Aorta (tissue), 5 donors: ENCODE measurements at regions of chr9 and their contacts with region 1.

Region 1: DNA sequence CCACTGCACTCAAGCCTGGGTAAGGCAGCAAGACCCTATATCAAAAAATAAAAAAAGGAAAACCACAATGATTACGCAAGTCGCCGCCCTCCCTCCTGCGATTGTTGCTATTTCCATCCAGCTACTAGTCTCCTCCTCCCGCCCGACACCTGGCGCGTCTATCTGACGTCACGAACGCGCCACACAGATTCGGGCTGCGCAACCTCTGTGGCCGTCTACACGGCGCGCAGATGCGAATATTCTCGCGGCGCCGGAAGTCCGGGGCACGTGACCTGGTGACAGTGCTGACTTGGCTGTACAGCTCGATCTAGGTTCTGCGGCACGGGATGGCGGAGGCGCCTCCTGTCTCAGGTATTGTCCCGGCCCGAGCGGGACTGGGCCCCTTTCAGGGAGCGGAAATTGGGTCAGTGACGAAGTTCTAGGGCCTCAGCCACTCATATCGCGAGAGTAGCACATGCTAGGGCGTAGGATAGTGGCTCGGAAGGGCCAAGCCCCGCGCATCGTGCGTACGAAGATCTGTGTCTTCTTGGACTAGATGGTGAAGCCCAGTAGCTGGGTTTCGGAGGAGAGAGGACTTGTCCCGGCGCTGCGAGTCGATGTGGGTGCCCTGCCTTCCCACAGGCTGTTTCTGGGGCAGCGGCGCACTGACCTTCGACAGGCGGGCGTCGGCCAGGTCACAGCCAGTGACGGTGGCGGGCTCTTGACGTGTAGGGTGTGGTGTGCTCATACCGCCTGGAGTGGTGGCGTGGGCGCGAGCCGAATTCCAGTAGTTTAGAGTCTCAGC is at the start of gene NFX1:
- DNase-seq: peak; percentile 99
- ATAC-seq: peak; percentile 98
- H3K4me3 ChIP-seq: peak within 1 kb of the TSS; percentile 67 to 77
- H3K27ac ChIP-seq: peak within 1 kb of the TSS; percentile 84 to 90
- H3K4me1 ChIP-seq: peaks cover 0 to 3% of the 10 kb centered on the region in 2 donors
- H3K27me3 ChIP-seq: no peaks in the 10 kb centered on the region
- total RNA-seq, gene NFX1: 35.8 to 38.3 TPM

Region 2: GRCh38 chr9:33264473-33265177 is 25.8 kb before region 1 on chr9 and contains the starts of genes BAG1 and CHMP5:
- intact Hi-C with region 1: loop called in 1 of 2 experiments (anchors 1 kb)
- DNase-seq: peak; percentile 99 to 100
- ATAC-seq: peak; percentile 99
- H3K4me3 ChIP-seq: peak within 1 kb of the TSS; percentile 61 to 77
- H3K27ac ChIP-seq: peak within 1 kb of the TSS in 1 of 2 donors; percentile 85
- H3K4me1 ChIP-seq: peaks cover 0 to 2% of the 10 kb centered on the region in 2 donors
- H3K27me3 ChIP-seq: no peaks in the 10 kb centered on the region
- total RNA-seq, gene BAG1: 60.4 to 82.0 TPM
- total RNA-seq, gene CHMP5: 53.1 to 59.0 TPM

Region 3: DNA sequence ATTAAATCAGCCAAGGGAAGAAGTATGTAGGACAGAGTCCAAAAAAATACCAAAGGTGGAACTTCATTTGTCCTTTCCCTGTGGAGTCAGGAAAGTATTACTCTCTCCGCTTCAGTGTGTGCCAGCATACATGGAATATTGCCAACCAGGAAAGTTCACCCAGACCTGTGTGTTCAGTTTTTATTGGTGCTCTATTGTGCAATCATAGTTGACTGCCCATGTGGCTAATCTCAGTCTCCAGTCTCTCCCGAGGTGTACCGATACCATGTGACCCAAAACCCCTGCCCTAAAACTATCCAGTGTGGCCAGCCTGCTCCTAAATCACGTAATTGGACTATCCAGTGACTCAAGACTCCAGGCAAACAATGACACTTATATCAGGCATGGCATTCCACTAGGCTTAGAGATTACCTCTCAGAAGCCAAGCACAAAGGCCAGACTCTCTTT is 38.7 kb after region 1 on chr9:
- intact Hi-C with region 1: loop called in 1 of 2 experiments (anchors 5 kb)
- DNase-seq: peak in 1 of 2 donors; percentile 46
- ATAC-seq: peak; percentile 67
- H3K4me3 ChIP-seq: no peak overlapping the region
- H3K27ac ChIP-seq: peak overlapping the region; percentile 32 to 43
- H3K4me1 ChIP-seq: no peaks in the 10 kb centered on the region
- H3K27me3 ChIP-seq: no peaks in the 10 kb centered on the region

Region 4: DNA sequence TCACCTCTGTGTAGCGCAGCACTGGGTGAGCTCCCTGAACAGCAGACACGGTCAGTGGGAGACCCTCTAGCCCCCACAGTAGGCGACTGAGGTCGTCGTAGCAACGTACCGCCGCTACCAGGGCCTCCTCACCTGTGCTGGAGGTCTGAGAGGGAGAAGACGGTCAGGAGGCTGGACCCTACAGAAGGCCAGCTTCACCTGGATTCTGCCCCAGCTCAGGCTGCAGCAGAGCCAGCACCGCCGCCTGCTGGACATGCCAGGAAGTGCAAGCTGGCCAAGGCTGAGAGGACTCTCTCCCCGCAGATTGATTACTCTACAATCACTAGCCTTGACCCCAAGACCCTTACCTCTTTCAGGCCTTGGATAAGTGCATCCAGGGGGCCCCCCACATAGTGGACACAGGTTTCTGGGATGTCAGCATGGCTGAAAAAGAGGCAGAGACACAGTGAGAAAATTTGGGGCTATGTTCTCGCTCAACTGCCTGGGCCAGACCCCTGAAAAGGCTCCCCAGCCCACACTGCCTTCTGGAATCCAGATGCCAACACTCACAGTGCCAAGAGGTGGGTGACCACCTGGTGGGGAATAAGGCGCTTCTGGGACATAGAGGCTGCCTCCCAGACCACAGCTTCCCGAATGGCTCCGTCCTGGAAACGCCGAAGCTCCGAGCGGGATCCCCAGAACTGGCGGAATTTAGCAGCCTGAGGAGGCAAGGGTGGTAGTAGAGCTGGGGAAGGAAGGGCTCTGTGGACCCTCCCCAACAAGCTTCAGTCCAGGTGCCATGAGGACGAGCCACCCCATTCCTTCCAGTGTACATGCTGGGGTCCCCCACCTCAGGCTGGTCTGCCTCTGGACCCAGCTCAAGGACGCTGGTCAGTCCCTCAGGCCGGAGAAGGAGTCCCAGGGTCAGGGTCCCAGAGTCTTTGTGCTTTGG is 176.4 kb after region 1 on chr9:
- intact Hi-C with region 1: loop called in 1 of 2 experiments (anchors 10 kb)
- DNase-seq: peak; percentile 62 to 88
- ATAC-seq: peak; percentile 53
- H3K4me3 ChIP-seq: no peak overlapping the region
- H3K27ac ChIP-seq: no peak overlapping the region
- H3K4me1 ChIP-seq: no peaks in the 10 kb centered on the region
- H3K27me3 ChIP-seq: no peaks in the 10 kb centered on the region